ENCODE measurements at regions of chr2 and their contacts with region 1.

Region 1: DNA sequence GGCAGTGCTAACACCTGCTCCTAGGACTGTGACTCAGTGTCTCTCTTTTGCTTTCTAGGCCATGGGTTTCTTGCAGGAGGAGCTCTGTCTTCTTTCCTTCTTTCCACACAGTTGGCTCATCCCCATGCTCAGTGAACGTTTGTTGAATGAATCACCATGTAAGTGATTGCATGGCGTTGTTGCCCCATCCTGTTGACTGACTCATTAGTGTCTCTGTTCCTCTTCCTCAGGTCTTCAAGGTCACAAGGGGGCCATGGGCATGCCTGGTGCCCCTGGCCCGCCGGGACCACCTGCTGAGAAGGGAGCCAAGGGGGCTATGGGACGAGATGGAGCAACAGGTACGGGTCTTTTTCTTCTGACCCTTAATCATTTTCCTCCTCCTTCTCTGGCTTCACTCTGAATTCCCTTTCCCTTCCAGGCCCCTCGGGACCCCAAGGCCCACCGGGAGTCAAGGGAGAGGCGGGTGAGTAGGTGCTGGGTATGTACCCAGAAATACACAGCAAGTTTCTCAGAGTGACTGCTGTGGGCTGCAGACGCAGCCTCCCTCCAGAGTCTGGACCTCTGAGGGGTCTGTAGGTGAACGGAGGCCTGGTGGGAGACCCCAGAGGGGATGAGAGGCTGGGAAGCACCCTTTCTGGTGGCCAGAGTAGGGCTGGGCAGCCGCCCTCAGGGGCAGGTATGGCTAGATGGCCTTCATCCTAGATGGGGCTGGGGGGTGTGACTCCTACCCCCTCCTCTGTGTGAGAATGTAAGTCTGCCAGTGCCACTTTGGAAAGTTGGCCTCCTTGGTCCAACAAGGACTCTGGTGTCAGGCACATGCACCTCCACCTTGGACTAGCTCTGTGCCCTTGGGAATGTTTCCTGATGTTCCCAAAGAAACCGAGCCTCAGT is 32.4 kb downstream of the MARCO start:
- DNase-seq: peak; percentile 96 to 100 (median 99)
- H3K4me3 ChIP-seq: peak overlapping the region in 1 of 3 experiments; percentile 14
- H3K4me3 Mint-ChIP-seq: peak overlapping the region in 1 of 2 donors; percentile 44
- H3K27ac ChIP-seq: peak overlapping the region; percentile 89 to 90
- H3K27ac Mint-ChIP-seq: peak overlapping the region; percentile 96 to 100 (median 98)
- H3K4me1 ChIP-seq: peaks cover 62 to 77% of the 10 kb centered on the region in 2 donors
- H3K4me1 Mint-ChIP-seq: peaks cover 81% of the 10 kb centered on the region
- H3K27me3 ChIP-seq: no peaks in the 10 kb centered on the region
- H3K27me3 Mint-ChIP-seq: peaks cover 0 to 3% (median 2%) of the 10 kb centered on the region in 3 donors
- CTCF ChIP-seq: no peak

Region 2: GRCh38 chr2:118882709-118883210 is 91.6 kb before region 1 on chr2:
- intact Hi-C with region 1: no loop called
- DNase-seq: peak; percentile 75 to 83 (median 82)
- H3K4me3 ChIP-seq: peak overlapping the region; percentile 5 to 68 (median 32)
- H3K4me3 Mint-ChIP-seq: peak overlapping the region; percentile 75 to 93
- H3K27ac ChIP-seq: no peak overlapping the region
- H3K27ac Mint-ChIP-seq: peak overlapping the region in 4 of 7 donors; percentile 35 to 82 (median 71)
- H3K4me1 ChIP-seq: peaks cover 16 to 20% of the 10 kb centered on the region in 2 donors
- H3K4me1 Mint-ChIP-seq: peaks cover 31% of the 10 kb centered on the region
- H3K27me3 ChIP-seq: peaks cover 4 to 8% of the 10 kb centered on the region in 2 donors
- H3K27me3 Mint-ChIP-seq: peaks cover 3 to 11% (median 11%) of the 10 kb centered on the region in 3 donors
- CTCF ChIP-seq: peak; percentile 93

Region 3: GRCh38 chr2:118902266-118903028 is 71.9 kb before region 1 on chr2:
- intact Hi-C with region 1: loop called in 1 of 2 experiments (anchors 5 kb)
- DNase-seq: peak; percentile 75 to 93 (median 87)
- H3K4me3 ChIP-seq: peak overlapping the region; percentile 1 to 67 (median 14)
- H3K4me3 Mint-ChIP-seq: peak overlapping the region; percentile 67 to 88
- H3K27ac ChIP-seq: peak overlapping the region; percentile 34 to 77
- H3K27ac Mint-ChIP-seq: peak overlapping the region; percentile 83 to 95 (median 93)
- H3K4me1 ChIP-seq: peaks cover 29 to 30% of the 10 kb centered on the region in 2 donors
- H3K4me1 Mint-ChIP-seq: peaks cover 34% of the 10 kb centered on the region
- H3K27me3 ChIP-seq: no peaks in the 10 kb centered on the region
- H3K27me3 Mint-ChIP-seq: peaks cover 4 to 15% (median 9%) of the 10 kb centered on the region in 3 donors
- CTCF ChIP-seq: no peak

Region 4: GRCh38 chr2:118940486-118941205 is 33.7 kb before region 1 on chr2:
- intact Hi-C with region 1: loop called (anchors 5 kb)
- DNase-seq: peak; percentile 77 to 93 (median 93)
- H3K4me3 ChIP-seq: peak overlapping the region in 2 of 3 experiments; percentile 12 to 60
- H3K4me3 Mint-ChIP-seq: peak overlapping the region; percentile 59 to 75
- H3K27ac ChIP-seq: peak overlapping the region; percentile 91 to 93
- H3K27ac Mint-ChIP-seq: peak overlapping the region; percentile 94 to 97 (median 95)
- H3K4me1 ChIP-seq: peaks cover 89 to 96% of the 10 kb centered on the region in 2 donors
- H3K4me1 Mint-ChIP-seq: peaks cover 54% of the 10 kb centered on the region
- H3K27me3 ChIP-seq: no peaks in the 10 kb centered on the region
- H3K27me3 Mint-ChIP-seq: peaks cover 0 to 2% (median 0%) of the 10 kb centered on the region in 3 donors
- CTCF ChIP-seq: peak; percentile 10

Region 5: DNA sequence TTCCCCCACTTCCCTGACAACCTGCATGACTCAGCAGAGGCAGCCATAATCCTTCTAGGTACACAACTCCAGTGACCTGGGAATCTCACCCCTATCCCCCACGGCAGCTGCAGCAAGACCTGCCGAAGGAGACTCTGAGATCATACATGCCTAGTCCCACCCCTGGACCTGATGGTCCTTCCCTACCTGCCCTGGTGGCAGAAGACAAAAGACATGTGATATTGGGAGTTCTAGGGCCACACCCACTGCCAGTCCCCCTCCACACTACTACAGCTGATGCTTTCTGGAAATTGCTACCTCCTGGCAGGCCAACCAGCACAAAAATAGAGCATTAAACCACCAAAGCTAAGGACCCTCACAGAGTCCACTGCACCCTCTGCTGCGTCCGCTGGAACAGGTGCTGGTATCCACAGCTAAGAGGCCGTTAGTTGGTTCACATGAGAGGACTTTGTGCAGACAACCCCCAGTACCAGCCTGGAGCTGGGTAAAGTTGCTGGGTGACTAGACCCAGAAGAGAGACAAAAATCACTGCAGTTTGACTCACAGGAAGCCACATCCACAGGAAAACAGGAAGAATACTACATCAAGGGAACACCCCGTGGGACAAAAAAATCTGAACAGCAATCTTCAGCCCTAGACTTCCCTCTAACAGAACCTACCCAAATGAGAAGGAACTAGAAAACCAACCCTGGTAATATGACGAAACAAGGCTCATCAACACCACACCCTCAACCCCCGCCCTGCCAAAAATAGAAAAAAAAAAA is 19.9 kb before region 1 on chr2:
- intact Hi-C with region 1: loop called in 1 of 2 experiments (anchors 2 kb)
- DNase-seq: peak; percentile 89 to 98 (median 94)
- H3K4me3 ChIP-seq: peak overlapping the region in 1 of 3 experiments; percentile 42
- H3K4me3 Mint-ChIP-seq: peak overlapping the region; percentile 47 to 64
- H3K27ac ChIP-seq: peak overlapping the region; percentile 99
- H3K27ac Mint-ChIP-seq: peak overlapping the region; percentile 95 to 100 (median 99)
- H3K4me1 ChIP-seq: peaks cover 63 to 79% of the 10 kb centered on the region in 2 donors
- H3K4me1 Mint-ChIP-seq: peaks cover 82% of the 10 kb centered on the region
- H3K27me3 ChIP-seq: no peaks in the 10 kb centered on the region
- H3K27me3 Mint-ChIP-seq: peaks cover 1 to 3% (median 2%) of the 10 kb centered on the region in 3 donors
- CTCF ChIP-seq: no peak

Region 6: GRCh38 chr2:119366649-119367471 is 392.5 kb after region 1 on chr2 and contains the starts of genes C2orf76 and DBI:
- intact Hi-C with region 1: loop called in 1 of 2 experiments (anchors 10 kb)
- DNase-seq: peak; percentile 93 to 95 (median 93)
- H3K4me3 ChIP-seq: peak within 1 kb of the TSS; percentile 60 to 96 (median 90)
- H3K4me3 Mint-ChIP-seq: peak within 1 kb of the TSS; percentile 98 to 99
- H3K27ac ChIP-seq: peak within 1 kb of the TSS; percentile 90 to 97
- H3K27ac Mint-ChIP-seq: peak within 1 kb of the TSS; percentile 97 to 99 (median 97)
- H3K4me1 ChIP-seq: peaks cover 23 to 32% of the 10 kb centered on the region in 2 donors
- H3K4me1 Mint-ChIP-seq: peaks cover 48% of the 10 kb centered on the region
- H3K27me3 ChIP-seq: no peaks in the 10 kb centered on the region
- H3K27me3 Mint-ChIP-seq: peaks cover 0 to 2% (median 0%) of the 10 kb centered on the region in 3 donors
- CTCF ChIP-seq: no peak
- polyA plus RNA-seq, gene C2orf76: 9.7 to 32.5 (median 31.0) TPM
- polyA plus RNA-seq, gene DBI: 126 to 436 (median 398) TPM

Measured in CD14-positive monocyte (primary cell).